CD4-positive, alpha-beta memory T cell (primary cell): ENCODE measurements at regions of chr13 and their contacts with region 1.

Region 1: DNA sequence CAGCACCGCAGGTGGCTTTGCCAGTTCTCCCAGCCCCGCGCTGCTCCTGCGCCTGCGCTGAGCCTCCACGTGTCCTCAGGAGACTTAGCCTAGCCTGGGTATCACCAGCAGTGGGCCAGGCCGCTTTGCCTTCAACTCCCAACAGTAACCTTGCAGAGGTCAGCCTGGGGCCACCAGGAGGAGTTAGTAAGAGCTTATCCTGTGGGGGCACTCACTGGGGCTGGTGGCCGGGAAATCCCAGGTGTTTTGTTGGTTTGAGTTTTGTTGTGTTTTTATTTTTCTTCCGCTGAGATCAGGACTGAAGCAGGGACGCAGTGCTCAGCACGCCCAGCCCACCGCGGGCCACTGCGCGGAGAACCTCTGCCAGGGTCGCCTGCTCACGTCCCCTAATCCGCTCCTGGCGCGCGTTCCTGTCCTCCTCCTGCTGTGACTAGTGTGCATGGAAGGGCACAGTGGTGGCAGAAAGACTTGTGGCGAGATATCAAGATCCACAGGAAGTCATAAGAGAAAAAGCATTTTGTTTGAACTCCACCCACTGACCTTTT is 207.4 kb upstream of the RFC3 start:
- DNase-seq: peak; percentile 54 to 74 (median 62)
- H3K4me3 ChIP-seq: peak overlapping the region in 1 of 2 donors; percentile 46
- H3K4me3 Mint-ChIP-seq: peak overlapping the region; percentile 85 to 94 (median 89)
- H3K27ac ChIP-seq: peak overlapping the region; percentile 36
- H3K27ac Mint-ChIP-seq: peak overlapping the region; percentile 80 to 96 (median 94)
- H3K4me1 ChIP-seq: peaks cover 33% of the 10 kb centered on the region
- H3K4me1 Mint-ChIP-seq: peaks cover 20 to 35% (median 31%) of the 10 kb centered on the region in 4 donors
- H3K27me3 ChIP-seq: no peaks in the 10 kb centered on the region
- H3K27me3 Mint-ChIP-seq: no peaks in the 10 kb centered on the region

Region 2: DNA sequence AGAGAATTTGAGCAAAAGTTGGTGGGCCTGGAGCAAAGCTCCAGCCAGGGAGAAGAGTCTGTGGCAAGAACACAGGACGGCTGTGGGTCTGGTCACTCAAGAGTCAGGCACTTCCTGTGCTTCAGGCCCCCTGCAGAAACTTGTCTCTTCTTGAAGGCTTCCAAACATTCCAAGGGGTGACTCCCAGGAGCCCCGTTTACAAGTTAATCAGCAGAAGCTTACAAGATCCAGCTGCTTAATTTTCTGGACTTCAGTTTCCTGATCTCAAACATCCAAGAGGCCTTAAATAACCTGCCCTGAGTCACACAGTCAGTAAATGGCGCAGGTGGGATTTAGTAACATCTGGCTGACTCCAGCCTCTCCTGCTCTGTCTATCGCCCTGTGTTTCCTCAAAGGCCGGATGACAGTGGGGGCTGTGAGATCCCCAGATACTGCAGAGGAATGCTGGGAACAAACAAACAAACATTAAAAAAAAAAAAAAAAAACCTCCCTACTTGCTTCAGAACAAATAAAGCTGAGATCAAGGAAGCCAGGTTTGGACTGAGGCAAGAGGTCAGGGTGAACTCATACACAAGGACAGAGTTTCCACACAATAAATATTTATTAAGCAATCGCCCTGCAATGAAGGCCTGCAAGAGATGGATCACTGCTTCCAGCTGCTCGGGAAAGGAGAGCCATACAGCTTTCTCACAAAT is 32.0 kb after region 1 on chr13:
- CTCF ChIA-PET with region 1: no interaction called
- POLR2A ChIA-PET with region 1: no interaction called
- intact Hi-C with region 1: no loop called
- DNase-seq: no peak
- H3K4me3 ChIP-seq: no peak overlapping the region
- H3K4me3 Mint-ChIP-seq: no peak overlapping the region
- H3K27ac ChIP-seq: no peak overlapping the region
- H3K27ac Mint-ChIP-seq: no peak overlapping the region
- H3K4me1 ChIP-seq: no peaks in the 10 kb centered on the region
- H3K4me1 Mint-ChIP-seq: peaks cover 0 to 6% (median 4%) of the 10 kb centered on the region in 4 donors
- H3K27me3 ChIP-seq: no peaks in the 10 kb centered on the region
- H3K27me3 Mint-ChIP-seq: no peaks in the 10 kb centered on the region

Region 3: DNA sequence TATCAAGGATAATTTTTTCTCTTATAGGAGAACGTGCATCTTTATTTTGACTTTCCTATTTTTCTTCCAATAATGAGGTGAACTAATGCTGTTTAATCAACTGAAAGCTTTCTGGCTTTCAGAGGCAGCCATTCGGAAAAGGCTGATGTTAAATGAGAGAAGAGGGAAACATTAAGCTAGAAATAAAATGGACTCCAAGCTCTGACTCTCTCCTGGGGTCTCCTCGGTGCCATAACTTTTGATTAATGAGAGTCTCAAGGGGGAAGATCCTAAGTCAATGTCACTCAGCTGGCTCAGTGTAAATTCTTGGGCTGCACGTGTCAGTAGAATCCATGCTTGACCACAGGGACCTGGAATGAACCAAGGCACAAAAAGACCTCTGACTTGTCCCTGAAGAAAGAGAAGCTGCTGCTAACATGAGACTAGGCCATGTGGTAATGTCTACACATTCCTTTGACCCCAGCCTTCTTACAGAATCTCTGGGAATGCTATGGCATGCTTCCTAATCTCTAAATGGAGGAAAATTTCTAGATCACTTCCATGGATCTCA is 55.2 kb after region 1 on chr13:
- CTCF ChIA-PET with region 1: no interaction called
- POLR2A ChIA-PET with region 1: no interaction called
- intact Hi-C with region 1: loop called (anchors 2 kb)
- DNase-seq: no peak
- H3K4me3 ChIP-seq: no peak overlapping the region
- H3K4me3 Mint-ChIP-seq: no peak overlapping the region
- H3K27ac ChIP-seq: no peak overlapping the region
- H3K27ac Mint-ChIP-seq: no peak overlapping the region
- H3K4me1 ChIP-seq: no peaks in the 10 kb centered on the region
- H3K4me1 Mint-ChIP-seq: peaks cover 7 to 9% (median 7%) of the 10 kb centered on the region in 4 donors
- H3K27me3 ChIP-seq: no peaks in the 10 kb centered on the region
- H3K27me3 Mint-ChIP-seq: peaks cover 0 to under 1% of the 10 kb centered on the region in 2 donors